Activated T-helper 1 cell treated with anti-CD3 and anti-CD28 coated beads, Interleukin-12 subunit alpha, Interleukin-12 subunit beta, Interleukin-2, Interleukin-4 antibody, amounts not matched to agents 30 ng/mL and 10 ng/mL and 1 ng/mL, durations not matched to agents 14 hours and 24 hours and 36 hours (primary cell): ENCODE measurements at regions of chr3 and their contacts with region 1.

Region 1: GRCh38 chr3:179015551-179016020 is 56.0 kb downstream of the ZMAT3 start:
- DNase-seq: peak; percentile 68
- H3K4me3 Mint-ChIP-seq: no peak overlapping the region
- H3K27ac Mint-ChIP-seq: peak overlapping the region; percentile 24
- H3K4me1 Mint-ChIP-seq: peaks cover 55% of the 10 kb centered on the region
- H3K27me3 Mint-ChIP-seq: peaks cover 7% of the 10 kb centered on the region

Region 2: GRCh38 chr3:179000144-179000543 is 15.4 kb before region 1 on chr3:
- intact Hi-C with region 1: loop called (anchors 1 kb)
- DNase-seq: no peak
- H3K4me3 Mint-ChIP-seq: peak overlapping the region; percentile 37
- H3K27ac Mint-ChIP-seq: peak overlapping the region; percentile 45
- H3K4me1 Mint-ChIP-seq: peaks cover 19% of the 10 kb centered on the region
- H3K27me3 Mint-ChIP-seq: peaks cover 11% of the 10 kb centered on the region

Region 3: DNA sequence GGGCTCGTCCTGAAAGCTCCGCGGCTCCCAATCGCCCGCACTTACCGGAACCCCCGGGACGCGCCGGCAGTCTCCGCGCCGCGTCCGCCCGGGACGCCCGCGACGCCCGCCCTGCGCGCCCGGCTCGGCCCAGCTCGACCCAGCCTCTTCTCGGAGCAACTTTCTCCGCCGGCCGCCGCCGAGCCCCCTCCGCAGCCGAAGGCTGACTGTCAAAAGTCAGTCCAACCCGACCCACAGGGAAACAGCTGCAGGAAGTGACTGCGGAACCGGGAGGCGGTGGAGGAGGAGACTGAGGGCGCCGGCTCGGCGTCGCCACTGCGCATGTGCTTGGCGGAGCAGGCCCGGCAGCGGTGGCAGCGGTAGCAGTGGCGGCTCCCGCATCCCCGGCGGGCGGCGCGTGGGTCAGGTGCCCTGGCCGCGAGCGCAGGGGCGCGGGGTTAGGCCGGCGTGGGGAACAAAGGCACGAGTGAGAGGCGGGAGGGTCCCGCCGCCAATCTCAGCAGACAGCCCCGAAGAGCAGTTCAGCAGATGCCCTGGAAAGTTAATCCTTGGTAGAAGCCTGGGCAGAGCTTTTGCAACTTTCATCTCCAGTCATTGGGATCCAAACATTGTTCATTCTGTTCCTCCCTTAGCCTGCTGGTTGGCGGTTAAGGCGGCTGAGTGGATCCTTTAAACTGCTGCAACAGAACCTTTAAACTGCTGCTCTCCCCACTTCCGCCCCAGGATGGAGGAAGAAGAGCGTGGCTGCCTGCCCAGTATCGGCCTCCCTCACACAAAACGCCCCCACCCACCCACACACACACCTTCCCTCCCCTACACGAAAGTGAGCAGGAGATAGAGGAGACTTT is 56.2 kb after region 1 on chr3 and contains the start of gene ZMAT3:
- intact Hi-C with region 1: loop called (anchors 1 kb)
- DNase-seq: peak; percentile 84
- H3K4me3 Mint-ChIP-seq: peak within 1 kb of the TSS; percentile 98
- H3K27ac Mint-ChIP-seq: peak within 1 kb of the TSS; percentile 95
- H3K4me1 Mint-ChIP-seq: peaks cover 43% of the 10 kb centered on the region
- H3K27me3 Mint-ChIP-seq: peaks cover 3% of the 10 kb centered on the region
- total RNA-seq, gene ZMAT3: 16.9 and 17.3 TPM in 2 replicates

Region 4: DNA sequence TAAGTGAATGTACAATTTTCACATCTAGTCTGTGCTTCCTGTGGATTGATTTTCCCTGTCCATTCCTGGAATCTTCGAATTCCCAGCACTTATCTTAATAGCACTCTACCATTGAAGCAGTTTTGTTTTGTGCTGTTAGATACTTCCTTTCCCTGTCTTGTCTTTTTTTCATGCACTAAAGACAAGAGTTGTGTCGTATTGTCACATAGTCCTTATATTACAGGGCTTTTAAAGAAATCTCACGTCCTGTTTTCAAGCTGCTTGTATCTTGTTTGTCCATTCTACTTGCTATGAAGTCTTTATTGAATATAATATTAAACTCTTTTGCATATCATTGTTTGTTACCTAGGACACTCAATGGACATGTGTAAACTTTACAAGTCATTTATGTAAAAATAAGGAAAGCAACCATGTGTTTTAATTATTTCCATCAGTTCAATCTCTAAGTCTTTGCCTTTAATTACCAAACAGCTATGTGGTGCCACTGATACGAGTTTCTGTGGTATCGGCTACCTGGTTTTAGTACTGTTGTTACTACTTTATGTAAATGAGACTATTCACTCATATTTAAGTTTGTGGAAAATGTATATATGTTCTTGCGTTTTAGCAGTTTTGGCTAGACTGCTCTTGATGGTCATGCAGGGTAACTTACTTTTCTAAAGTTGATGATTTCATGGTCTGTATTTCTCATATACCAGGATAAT is 142.9 kb after region 1 on chr3:
- intact Hi-C with region 1: no loop called
- DNase-seq: no peak
- H3K4me3 Mint-ChIP-seq: no peak overlapping the region
- H3K27ac Mint-ChIP-seq: no peak overlapping the region
- H3K4me1 Mint-ChIP-seq: peaks cover 5% of the 10 kb centered on the region
- H3K27me3 Mint-ChIP-seq: no peaks in the 10 kb centered on the region

Region 5: GRCh38 chr3:179347345-179348194 is 332.0 kb after region 1 on chr3 and contains the start of gene MFN1:
- intact Hi-C with region 1: loop called (anchors 1 kb)
- DNase-seq: peak; percentile 87
- H3K4me3 Mint-ChIP-seq: peak within 1 kb of the TSS; percentile 98
- H3K27ac Mint-ChIP-seq: peak within 1 kb of the TSS; percentile 96
- H3K4me1 Mint-ChIP-seq: peaks cover 25% of the 10 kb centered on the region
- H3K27me3 Mint-ChIP-seq: no peaks in the 10 kb centered on the region
- total RNA-seq, gene MFN1: 29.5 and 37.7 TPM in 2 replicates

Region 6: GRCh38 chr3:179604321-179605078 is 588.9 kb after region 1 on chr3 and contains the starts of genes MRPL47 and NDUFB5:
- intact Hi-C with region 1: loop called (anchors 1 kb)
- DNase-seq: peak; percentile 91
- H3K4me3 Mint-ChIP-seq: peak within 1 kb of the TSS; percentile 97
- H3K27ac Mint-ChIP-seq: peak within 1 kb of the TSS; percentile 99
- H3K4me1 Mint-ChIP-seq: peaks cover 36% of the 10 kb centered on the region
- H3K27me3 Mint-ChIP-seq: no peaks in the 10 kb centered on the region
- total RNA-seq, gene MRPL47: 65.1 and 65.5 TPM in 2 replicates
- total RNA-seq, gene NDUFB5: 81.5 and 86.1 TPM in 2 replicates